SK-N-SH (cell line): ENCODE measurements at regions of chrX and their contacts with region 1.

Region 1: DNA sequence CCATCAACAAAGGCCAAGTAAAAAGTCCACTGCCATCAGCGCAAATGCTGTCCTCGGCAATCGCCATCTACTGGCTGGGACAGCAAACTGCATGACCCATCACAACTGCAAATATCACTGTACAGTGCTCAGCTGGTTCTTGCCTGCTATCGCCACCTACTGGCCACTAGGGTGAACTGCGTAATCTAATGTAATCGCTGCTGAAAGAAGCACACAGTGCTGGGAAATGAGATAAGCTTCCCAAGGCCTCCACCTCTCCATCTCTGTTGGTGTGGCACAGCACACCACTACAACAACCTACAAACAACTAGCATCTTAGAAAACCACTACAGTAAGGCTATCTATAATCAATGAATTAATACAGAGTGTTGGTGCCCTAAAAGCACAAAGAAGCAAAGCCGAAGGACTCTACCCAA is 298.3 kb downstream of the TEX13A start:
- DNase-seq: peak; percentile 69
- H3K4me3 ChIP-seq: no peak overlapping the region; a peak in 1 of 4 replicates
- H3K27ac ChIP-seq: no peak overlapping the region
- H3K4me1 ChIP-seq: no peaks in the 10 kb centered on the region
- H3K27me3 ChIP-seq: no peaks in the 10 kb centered on the region; the same call in 1 of the 2 replicates
- CTCF ChIP-seq: peak; percentile 99
- EP300 ChIP-seq: no peak
- RAD21 ChIP-seq: peak; percentile 72

Region 2: GRCh38 chrX:104935581-104935980 is 13.4 kb after region 1 on chrX:
- CTCF ChIA-PET with region 1: interaction called, 30 read pairs
- POLR2A ChIA-PET with region 1: no interaction called
- DNase-seq: no peak
- H3K4me3 ChIP-seq: no peak overlapping the region
- H3K27ac ChIP-seq: no peak overlapping the region
- H3K4me1 ChIP-seq: no peaks in the 10 kb centered on the region
- H3K27me3 ChIP-seq: no peaks in the 10 kb centered on the region; the same call in 1 of the 2 replicates
- CTCF ChIP-seq: no peak
- EP300 ChIP-seq: no peak
- RAD21 ChIP-seq: no peak

Region 3: GRCh38 chrX:105375816-105376215 is 453.6 kb after region 1 on chrX:
- CTCF ChIA-PET with region 1: no interaction called
- POLR2A ChIA-PET with region 1: no interaction called
- DNase-seq: no peak
- H3K4me3 ChIP-seq: no peak overlapping the region
- H3K27ac ChIP-seq: no peak overlapping the region
- H3K4me1 ChIP-seq: no peaks in the 10 kb centered on the region
- H3K27me3 ChIP-seq: no peaks in the 10 kb centered on the region
- CTCF ChIP-seq: no peak
- EP300 ChIP-seq: no peak
- RAD21 ChIP-seq: no peak